ENCODE measurements at regions of chr6 and their contacts with region 1.

Region 1: DNA sequence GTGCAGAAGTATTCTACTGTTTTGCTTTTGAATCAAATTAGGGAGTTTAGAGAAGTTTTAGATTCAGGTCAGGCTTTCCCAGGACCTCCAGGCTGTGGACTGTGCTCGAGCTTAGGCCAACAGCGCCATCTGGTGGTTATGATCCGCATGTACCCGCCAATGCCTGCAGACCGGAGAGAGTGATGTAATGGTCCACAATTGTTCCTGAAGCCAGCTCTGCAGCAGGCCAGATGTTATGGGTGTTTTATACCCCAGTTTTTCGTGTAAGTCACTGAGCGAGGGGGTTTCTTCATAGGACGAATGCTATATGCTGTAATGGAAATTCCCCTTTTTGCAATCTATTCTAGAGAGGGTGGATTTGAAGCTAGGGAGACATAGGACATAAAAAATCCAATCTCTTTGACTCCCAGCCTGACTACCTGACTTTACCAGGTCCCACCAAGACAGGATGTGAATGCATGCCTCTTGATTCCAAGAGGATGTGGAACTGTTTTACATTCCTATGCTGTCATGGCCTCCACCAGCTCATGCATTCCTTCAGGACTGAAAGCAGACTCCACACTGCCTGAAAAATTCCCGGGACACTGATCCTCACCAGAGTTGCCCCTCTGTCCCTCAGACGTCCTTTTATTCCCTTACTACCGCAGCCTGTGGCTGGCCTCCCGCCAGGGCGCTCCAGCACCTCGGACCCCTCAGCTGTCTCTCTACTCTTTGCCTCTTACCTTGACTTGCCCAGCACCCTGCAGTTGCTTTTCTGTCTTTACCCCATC is 41.2 kb upstream of the LY86 start:
- DNase-seq: peak; percentile 91
- H3K4me3 Mint-ChIP-seq: peak overlapping the region; percentile 64
- H3K27ac Mint-ChIP-seq: no peak overlapping the region
- H3K4me1 Mint-ChIP-seq: peaks cover 6% of the 10 kb centered on the region
- H3K27me3 Mint-ChIP-seq: peaks cover 32% of the 10 kb centered on the region

Region 2: DNA sequence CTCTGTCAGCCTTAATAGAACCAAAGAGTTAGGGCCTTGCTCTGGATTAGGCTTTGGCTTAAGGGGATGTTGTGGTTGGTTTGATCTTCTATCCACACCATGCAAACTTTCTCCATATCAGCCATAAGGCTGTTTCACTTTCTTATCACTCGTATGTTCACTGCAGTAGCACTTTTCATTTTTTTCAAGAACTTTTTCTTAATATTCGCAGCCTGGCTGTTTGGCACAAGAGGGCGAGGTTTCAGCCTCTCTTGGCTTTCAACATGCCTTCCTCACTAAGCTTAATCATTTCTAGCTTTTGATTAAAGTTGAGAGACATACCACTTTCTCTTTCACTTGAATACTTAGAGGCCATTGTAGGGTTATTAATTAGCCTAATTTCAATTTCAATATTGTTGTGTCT is 733.7 kb before region 1 on chr6:
- CTCF ChIA-PET with region 1: no interaction called
- intact Hi-C with region 1: loop called (anchors 10 kb)
- DNase-seq: peak; percentile 36
- H3K4me3 Mint-ChIP-seq: no peak overlapping the region
- H3K27ac Mint-ChIP-seq: no peak overlapping the region
- H3K4me1 Mint-ChIP-seq: peaks cover 29% of the 10 kb centered on the region
- H3K27me3 Mint-ChIP-seq: no peaks in the 10 kb centered on the region

Region 3: DNA sequence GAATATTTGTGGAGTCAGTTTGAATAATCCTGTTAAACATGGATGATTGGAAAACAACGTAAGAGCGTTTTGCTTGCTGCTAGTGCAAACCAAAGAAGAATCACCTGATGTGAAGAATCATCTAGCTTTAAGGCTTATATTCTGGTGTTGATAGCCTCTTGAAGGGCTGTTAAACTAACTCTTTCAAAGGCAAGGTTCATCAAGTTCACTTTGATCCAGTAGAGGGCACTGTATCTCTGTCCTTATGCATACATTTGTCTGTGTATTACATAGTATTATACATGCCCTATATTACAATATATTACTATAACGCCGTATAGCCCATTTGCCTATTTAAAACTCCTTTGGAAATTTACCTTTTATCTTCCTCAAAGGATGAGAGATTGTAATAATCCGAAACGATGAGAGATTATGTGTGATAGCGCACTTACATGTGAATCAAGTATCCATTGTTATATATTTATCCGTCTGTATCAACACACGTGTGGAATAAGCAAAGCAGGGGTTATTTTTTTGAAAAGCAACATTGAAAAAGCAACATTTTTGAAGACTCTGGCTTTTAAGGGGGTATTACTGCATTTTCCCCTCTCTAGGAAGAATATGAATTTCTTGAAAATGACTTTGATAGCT is 489.8 kb before region 1 on chr6:
- CTCF ChIA-PET with region 1: interaction called, 35 read pairs
- intact Hi-C with region 1: loop called (anchors 1 kb)
- DNase-seq: no peak
- H3K4me3 Mint-ChIP-seq: no peak overlapping the region
- H3K27ac Mint-ChIP-seq: no peak overlapping the region
- H3K4me1 Mint-ChIP-seq: no peaks in the 10 kb centered on the region
- H3K27me3 Mint-ChIP-seq: peaks cover 27% of the 10 kb centered on the region

Region 4: GRCh38 chr6:6315660-6316059 is 231.6 kb before region 1 on chr6:
- CTCF ChIA-PET with region 1: no interaction called
- intact Hi-C with region 1: loop called (anchors 2 kb)
- DNase-seq: peak; percentile 64
- H3K4me3 Mint-ChIP-seq: no peak overlapping the region
- H3K27ac Mint-ChIP-seq: no peak overlapping the region
- H3K4me1 Mint-ChIP-seq: no peaks in the 10 kb centered on the region
- H3K27me3 Mint-ChIP-seq: peaks cover 48% of the 10 kb centered on the region

Region 5: DNA sequence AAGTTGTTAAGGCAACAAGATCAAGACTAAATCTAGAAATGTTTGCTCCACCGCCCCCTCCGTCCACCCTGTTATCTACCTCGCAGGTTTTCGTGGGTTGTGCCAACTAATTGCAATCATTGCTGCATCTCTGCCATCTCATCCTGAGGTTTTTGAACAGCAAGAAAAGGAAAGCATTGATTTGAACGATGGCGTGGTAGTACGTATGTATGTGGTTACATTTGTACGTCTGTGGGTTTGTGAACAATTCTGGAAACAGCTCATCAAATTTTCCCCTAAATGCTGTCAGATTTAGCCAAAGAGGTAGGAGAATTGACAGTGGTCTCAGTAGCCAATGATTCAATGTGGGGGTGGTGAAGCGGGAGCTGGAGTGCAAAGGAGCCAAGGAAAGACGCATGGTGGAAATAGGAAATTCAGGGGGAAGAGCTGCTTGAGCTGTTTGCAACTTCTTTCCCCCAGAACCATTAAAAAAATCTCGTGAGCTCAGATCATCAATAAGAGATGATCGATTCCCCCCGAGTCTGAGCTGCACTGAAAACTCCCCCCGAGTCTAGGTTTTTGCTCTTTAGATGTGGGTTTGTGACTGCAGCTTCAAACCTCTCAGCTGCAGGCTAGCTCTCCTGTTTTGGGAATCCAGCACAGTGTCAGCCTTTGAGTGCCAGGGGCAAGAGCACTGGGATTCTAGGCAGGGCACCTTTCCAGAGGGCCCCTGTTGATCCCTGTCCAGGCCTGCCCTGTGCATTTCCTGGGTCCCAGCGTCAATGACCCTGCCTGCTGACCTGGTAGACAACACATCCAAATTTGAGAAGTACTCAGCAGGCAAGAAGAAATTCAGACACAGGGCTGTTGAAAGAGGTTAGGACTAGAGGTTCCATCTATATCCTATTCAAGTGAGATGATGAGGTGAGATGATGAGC is 31.3 kb before region 1 on chr6:
- CTCF ChIA-PET with region 1: interaction called, 4 read pairs
- intact Hi-C with region 1: loop called (anchors 2 kb)
- DNase-seq: peak; percentile 86
- H3K4me3 Mint-ChIP-seq: no peak overlapping the region
- H3K27ac Mint-ChIP-seq: peak overlapping the region; percentile 46
- H3K4me1 Mint-ChIP-seq: peaks cover 23% of the 10 kb centered on the region
- H3K27me3 Mint-ChIP-seq: peaks cover 68% of the 10 kb centered on the region

Measured in activated naive CD4-positive, alpha-beta T cell treated with anti-CD3 and anti-CD28 coated beads for 36 hours (primary cell).